ENCODE measurements at regions of chr1 and their contacts with region 1.

Region 1: GRCh38 chr1:223244366-223245103 is 101.5 kb upstream of the TLR5 start:
- DNase-seq: peak; percentile 43
- H3K4me3 Mint-ChIP-seq: no peak overlapping the region
- H3K27ac Mint-ChIP-seq: peak overlapping the region; percentile 40
- H3K4me1 Mint-ChIP-seq: peaks cover 45% of the 10 kb centered on the region
- H3K27me3 Mint-ChIP-seq: no peaks in the 10 kb centered on the region
- CTCF ChIP-seq: no peak

Region 2: DNA sequence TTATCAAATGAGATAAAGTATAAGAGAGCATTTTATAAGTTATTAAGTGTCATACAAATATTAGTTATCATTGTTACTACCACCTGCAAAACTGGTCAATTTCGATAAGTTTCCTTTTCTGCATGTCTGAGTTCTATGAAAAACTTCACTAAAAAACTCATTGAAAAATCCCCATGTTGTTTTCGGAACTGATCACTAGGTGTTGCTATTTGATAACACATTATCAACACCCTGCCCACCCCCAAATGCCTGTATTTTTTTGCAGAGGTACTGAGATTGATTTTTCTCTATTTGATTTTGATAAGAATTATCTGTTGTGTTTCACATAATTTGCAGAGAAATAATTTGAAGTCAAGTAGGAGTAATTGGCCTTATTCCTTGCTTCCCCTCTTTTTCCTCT is 451.8 kb before region 1 on chr1:
- CTCF ChIA-PET with region 1: interaction called, 3 read pairs
- intact Hi-C with region 1: loop called (anchors 10 kb)
- DNase-seq: no peak
- H3K4me3 Mint-ChIP-seq: no peak overlapping the region
- H3K27ac Mint-ChIP-seq: no peak overlapping the region
- H3K4me1 Mint-ChIP-seq: no peaks in the 10 kb centered on the region
- H3K27me3 Mint-ChIP-seq: peaks cover 20% of the 10 kb centered on the region
- CTCF ChIP-seq: peak; percentile 55

Region 3: DNA sequence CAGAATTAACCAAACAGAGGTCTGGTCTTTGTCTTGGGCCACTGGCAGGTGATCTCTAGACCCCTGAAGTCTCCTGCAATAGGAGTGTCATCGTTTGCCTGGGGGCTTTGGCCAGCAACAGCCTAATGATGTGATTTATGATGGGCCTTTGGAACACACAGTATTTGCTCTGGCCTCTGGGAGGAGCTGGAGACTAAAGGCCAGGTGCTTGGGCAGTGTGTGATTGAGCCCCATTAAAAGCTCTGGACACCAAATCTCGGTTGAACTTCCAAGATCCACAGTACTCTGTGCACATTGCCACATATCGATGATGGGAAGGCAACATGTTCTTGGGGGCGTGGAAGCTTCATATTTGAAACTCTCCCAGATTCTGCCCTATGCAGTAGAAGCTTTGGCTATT is 69.5 kb before region 1 on chr1:
- CTCF ChIA-PET with region 1: interaction called, 15 read pairs
- intact Hi-C with region 1: loop called (anchors 1 kb)
- DNase-seq: peak; percentile 54
- H3K4me3 Mint-ChIP-seq: no peak overlapping the region
- H3K27ac Mint-ChIP-seq: no peak overlapping the region
- H3K4me1 Mint-ChIP-seq: peaks cover 38% of the 10 kb centered on the region
- H3K27me3 Mint-ChIP-seq: no peaks in the 10 kb centered on the region
- CTCF ChIP-seq: peak; percentile 47

Measured in Calu3 (cell line).